ENCODE measurements at regions of chr11 and their contacts with region 1.

Region 1: DNA sequence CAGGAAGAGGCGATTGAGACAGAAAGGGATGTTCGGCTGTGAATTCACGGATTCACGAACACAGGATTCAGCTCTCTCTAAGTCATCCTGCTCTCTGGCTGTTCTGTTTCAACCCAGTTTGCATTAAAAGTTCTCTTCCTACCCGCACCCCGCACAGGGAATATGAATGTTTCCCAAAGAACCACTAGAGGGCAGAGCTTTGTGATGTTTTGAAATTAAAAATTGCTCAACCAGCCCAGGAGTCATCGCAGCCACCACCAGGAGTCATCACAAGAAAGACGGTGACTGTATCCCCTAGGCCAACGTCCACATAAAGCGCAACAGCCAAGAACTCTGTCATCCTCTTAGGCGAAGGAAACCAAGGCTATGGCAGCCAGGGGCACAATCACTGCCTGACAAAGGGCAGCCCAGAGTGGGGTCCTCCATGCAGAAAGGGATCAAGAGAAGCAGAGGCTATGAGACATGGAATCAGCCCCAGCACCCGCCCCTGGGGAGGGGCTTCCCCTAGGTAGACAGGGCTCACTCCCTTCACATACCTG is 122.4 kb downstream of the WT1 start:
- DNase-seq: peak; percentile 62
- H3K4me3 Mint-ChIP-seq: no peak overlapping the region
- H3K27ac Mint-ChIP-seq: no peak overlapping the region
- H3K4me1 Mint-ChIP-seq: peaks cover 4% of the 10 kb centered on the region
- H3K27me3 Mint-ChIP-seq: peaks cover 9% of the 10 kb centered on the region

Region 2: DNA sequence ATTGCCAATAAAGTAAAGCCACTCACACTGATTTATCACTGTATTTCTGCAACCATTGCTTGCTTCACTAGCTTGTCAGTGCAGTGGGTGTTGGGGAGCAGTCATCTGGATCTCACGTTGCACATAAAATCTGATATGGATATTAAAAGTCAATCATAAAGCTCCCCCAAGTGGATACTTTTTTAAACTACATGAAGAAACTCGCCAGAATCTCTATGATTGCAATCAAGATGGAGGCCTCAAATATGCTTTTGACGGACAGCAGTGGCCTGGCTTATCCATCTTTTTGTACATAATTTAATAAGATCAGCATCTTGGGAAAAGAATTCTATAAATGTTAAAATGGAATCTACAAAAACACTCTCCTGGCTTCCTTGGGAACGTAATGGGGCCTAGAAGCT is 15.3 kb before region 1 on chr11:
- CTCF ChIA-PET with region 1: interaction called, 14 read pairs
- intact Hi-C with region 1: no loop called
- DNase-seq: no peak
- H3K4me3 Mint-ChIP-seq: no peak overlapping the region
- H3K27ac Mint-ChIP-seq: no peak overlapping the region
- H3K4me1 Mint-ChIP-seq: no peaks in the 10 kb centered on the region
- H3K27me3 Mint-ChIP-seq: no peaks in the 10 kb centered on the region

Region 3: GRCh38 chr11:32302821-32303220 is 10.1 kb before region 1 on chr11:
- CTCF ChIA-PET with region 1: interaction called, 14 read pairs
- intact Hi-C with region 1: no loop called
- DNase-seq: no peak
- H3K4me3 Mint-ChIP-seq: no peak overlapping the region
- H3K27ac Mint-ChIP-seq: no peak overlapping the region
- H3K4me1 Mint-ChIP-seq: no peaks in the 10 kb centered on the region
- H3K27me3 Mint-ChIP-seq: no peaks in the 10 kb centered on the region

Region 4: GRCh38 chr11:32333320-32333991 is 20.5 kb after region 1 on chr11:
- CTCF ChIA-PET with region 1: no interaction called
- intact Hi-C with region 1: loop called (anchors 1 kb)
- DNase-seq: peak; percentile 50
- H3K4me3 Mint-ChIP-seq: peak overlapping the region; percentile 50
- H3K27ac Mint-ChIP-seq: no peak overlapping the region
- H3K4me1 Mint-ChIP-seq: peaks cover 15% of the 10 kb centered on the region
- H3K27me3 Mint-ChIP-seq: peaks cover 40% of the 10 kb centered on the region